Ovary (tissue), 10 donors: ENCODE measurements at regions of chr9 and their contacts with region 1.

Region 1: DNA sequence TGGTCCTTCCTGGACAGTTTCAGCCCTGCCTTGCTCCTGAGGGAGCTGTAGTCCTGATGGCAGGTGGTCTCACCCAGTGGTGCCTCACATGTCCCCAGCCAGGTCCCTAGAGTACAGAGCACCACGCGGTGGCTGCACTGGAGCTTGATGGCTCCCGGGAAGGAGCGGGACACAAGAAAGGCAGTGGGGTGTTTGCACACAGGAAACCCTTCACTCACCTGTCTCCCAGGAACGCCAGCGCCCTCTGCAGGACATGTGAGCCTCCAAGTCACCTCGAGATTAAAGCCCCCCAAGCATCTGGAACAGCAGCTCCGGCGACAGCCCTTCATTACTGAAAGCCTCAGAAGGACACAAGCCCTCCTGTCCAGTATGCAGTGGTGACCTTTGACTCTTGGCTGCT is 19.9 kb upstream of the TMEM250 start:
- DNase-seq: no peak
- H3K4me3 ChIP-seq: no peak overlapping the region
- H3K27ac ChIP-seq: no peak overlapping the region
- H3K4me1 ChIP-seq: no peaks in the 10 kb centered on the region
- H3K27me3 ChIP-seq: no peaks in the 10 kb centered on the region
- CTCF ChIP-seq: no peak
- EP300 ChIP-seq: no peak
- POLR2A ChIP-seq: no peak

Region 2: GRCh38 chr9:136385015-136385414 is 246.4 kb after region 1 on chr9:
- intact Hi-C with region 1: loop called in 1 of 4 experiments (anchors 10 kb)
- DNase-seq: no peak
- H3K4me3 ChIP-seq: no peak overlapping the region
- H3K27ac ChIP-seq: no peak overlapping the region
- H3K4me1 ChIP-seq: no peaks in the 10 kb centered on the region
- H3K27me3 ChIP-seq: no peaks in the 10 kb centered on the region
- CTCF ChIP-seq: no peak
- EP300 ChIP-seq: no peak
- POLR2A ChIP-seq: no peak

Region 3: DNA sequence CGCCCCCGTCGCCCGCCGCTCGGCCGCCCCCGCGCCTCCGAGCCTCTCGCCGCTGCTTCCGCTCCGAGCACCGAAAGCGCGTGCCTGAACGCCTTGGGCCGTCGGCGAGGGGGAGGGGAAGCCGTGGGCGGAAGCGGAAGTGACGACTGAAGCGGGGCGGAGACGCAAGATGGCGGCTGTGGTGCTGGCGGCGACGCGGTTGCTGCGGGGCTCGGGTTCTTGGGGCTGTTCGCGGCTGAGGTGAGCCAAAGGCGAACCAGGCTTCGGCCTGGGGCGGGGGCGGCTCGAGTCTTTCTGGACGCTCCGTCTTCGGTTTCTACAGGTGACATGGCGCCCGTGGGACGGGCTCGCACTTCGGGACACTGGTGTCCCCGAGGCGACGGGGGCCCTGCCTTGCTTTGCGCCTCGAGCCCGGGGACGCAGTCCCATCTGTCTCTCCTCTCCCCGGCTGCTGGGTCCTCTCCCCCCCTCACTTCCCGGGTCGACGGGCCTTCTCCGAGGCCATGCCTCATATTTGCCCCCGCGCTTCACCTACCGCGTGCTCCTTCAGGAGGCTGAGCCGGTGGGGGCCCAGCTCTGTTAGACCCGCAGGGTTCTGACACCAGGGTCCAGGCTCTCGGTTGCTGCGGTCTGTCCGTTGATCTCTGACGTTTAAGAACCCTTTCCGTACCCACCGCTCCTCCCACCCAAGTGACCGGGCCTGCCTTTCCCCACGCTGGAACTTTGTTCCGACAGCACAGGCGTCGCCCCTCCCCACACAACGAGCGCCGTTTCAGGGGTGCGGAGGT is 272.1 kb after region 1 on chr9 and contains the starts of genes ENTR1 and PMPCA:
- intact Hi-C with region 1: no loop called
- DNase-seq: peak; percentile 90 to 95 (median 94)
- H3K4me3 ChIP-seq: peak within 1 kb of the TSS; percentile 92
- H3K27ac ChIP-seq: peak within 1 kb of the TSS; percentile 71 to 74
- H3K4me1 ChIP-seq: peaks cover 2% of the 10 kb centered on the region
- H3K27me3 ChIP-seq: no peaks in the 10 kb centered on the region
- CTCF ChIP-seq: no peak
- EP300 ChIP-seq: no peak
- POLR2A ChIP-seq: peak; percentile 93
- total RNA-seq, gene ENTR1: 21.3 to 52.5 (median 28.9) TPM
- total RNA-seq, gene PMPCA: 18.7 to 46.0 (median 40.1) TPM